MCF 10A (cell line): ENCODE measurements at regions of chr3 and their contacts with region 1.

Region 1: DNA sequence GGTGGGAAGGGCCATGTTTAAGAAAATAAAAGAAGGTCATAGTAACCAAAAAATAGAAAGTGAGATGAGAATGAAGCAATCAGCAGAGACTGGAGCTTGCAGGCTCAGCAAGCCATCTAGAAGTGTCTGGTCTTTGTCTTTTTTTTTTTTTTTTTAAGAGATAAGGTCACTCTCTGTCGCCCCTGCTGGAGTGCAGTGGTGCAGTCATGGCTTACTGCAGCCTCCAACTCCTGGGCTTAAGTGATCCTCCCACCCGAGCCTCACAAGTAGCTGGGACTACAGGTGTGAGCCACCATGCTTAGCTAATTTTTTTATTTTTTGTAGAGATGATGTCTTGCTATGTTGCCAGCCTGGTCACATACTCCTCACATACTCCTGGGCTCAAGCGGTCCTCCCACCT is 36.2 kb downstream of the GXYLT2 start:
- DNase-seq: no peak
- H3K4me3 Mint-ChIP-seq: no peak overlapping the region
- H3K27ac Mint-ChIP-seq: no peak overlapping the region
- H3K4me1 Mint-ChIP-seq: no peaks in the 10 kb centered on the region
- H3K27me3 Mint-ChIP-seq: no peaks in the 10 kb centered on the region
- CTCF ChIP-seq: peak; percentile 9

Region 2: GRCh38 chr3:72938471-72939265 is 14.6 kb after region 1 on chr3:
- CTCF ChIA-PET with region 1: interaction called, 14 read pairs
- POLR2A ChIA-PET with region 1: no interaction called
- intact Hi-C with region 1: no loop called
- DNase-seq: peak; percentile 76
- H3K4me3 Mint-ChIP-seq: peak overlapping the region; percentile 13
- H3K27ac Mint-ChIP-seq: no peak overlapping the region
- H3K4me1 Mint-ChIP-seq: peaks cover 12% of the 10 kb centered on the region
- H3K27me3 Mint-ChIP-seq: no peaks in the 10 kb centered on the region
- CTCF ChIP-seq: peak; percentile 71